Mammary epithelial cell (primary cell): ENCODE measurements at regions of chr2 and their contacts with region 1.

Region 1: GRCh38 chr2:241096979-241097378 is 5.1 kb downstream of the MTERF4 start:
- DNase-seq: no peak
- H3K4me3 ChIP-seq: no peak overlapping the region
- H3K27ac ChIP-seq: no peak overlapping the region
- H3K4me1 ChIP-seq: peaks cover 5% of the 10 kb centered on the region
- H3K27me3 ChIP-seq: no peaks in the 10 kb centered on the region
- CTCF ChIP-seq: no peak

Region 2: DNA sequence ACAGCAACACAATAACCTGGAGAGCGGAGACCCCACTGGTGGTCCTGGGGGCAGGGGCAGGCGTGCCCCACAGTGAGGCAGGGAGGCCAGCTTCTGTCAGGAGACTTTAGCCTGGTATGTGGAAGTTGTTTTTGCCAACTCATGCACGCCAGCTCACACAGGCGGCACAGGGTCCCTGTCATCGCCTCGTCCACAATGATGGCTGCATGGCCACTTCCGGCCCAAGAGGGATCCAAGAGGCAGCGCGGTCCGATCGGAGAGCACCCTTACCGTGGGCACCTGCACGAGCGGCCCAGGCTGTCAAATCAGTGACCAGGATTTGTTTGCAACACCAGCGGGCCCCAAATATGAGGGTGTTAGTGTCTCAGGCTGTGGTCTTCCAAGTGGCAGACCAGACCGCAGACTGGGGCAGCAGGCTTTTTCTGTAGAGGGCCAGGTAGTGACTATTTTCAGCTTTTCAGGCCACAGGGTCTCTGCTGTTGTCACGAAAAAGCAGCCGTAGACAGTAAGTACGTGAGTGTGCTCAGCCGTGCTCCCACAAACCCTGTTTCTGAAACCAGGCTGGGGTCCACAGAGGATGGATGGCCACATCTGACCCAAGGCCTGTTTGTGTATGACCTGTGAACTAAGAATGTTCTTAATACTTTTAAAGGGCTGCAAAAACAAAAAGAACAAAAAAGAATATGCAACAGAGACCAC is 77.4 kb before region 1 on chr2:
- CTCF ChIA-PET with region 1: no interaction called
- dilution Hi-C with region 1: loop called (anchors 5 kb)
- in situ Hi-C with region 1: no loop called
- intact Hi-C with region 1: no loop called
- DNase-seq: no peak
- H3K4me3 ChIP-seq: no peak overlapping the region
- H3K27ac ChIP-seq: no peak overlapping the region
- H3K4me1 ChIP-seq: peaks cover 8% of the 10 kb centered on the region
- H3K27me3 ChIP-seq: peaks cover 2% of the 10 kb centered on the region
- CTCF ChIP-seq: no peak

Region 3: DNA sequence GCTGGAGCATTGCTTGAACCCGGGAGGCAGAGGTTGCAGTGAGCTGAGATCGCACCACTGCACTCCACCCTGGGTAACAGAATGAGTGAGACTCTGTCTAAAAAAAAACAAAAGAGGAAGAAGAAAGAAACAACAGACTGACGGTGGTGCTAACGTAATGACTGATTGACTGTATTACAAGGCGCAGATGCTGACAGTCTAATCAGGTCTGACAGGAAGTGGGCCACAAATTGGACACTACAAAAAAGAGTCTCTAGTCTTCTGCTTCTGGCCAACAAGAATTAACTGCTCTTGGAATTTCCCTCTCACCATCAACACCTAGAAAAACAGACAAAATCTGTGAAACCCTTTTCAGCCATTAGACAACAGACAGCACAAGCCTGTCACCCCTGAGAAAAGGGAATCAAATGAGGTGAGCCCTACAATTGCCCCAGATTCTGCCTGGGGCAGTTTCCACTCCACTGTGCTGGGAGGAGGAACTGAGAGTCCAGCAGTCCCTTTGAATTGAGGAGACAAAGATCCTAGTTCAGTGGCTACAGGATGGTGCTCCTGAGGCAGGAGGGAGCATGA is 55.3 kb before region 1 on chr2:
- CTCF ChIA-PET with region 1: no interaction called
- dilution Hi-C with region 1: no loop called
- in situ Hi-C with region 1: no loop called
- intact Hi-C with region 1: no loop called
- DNase-seq: no peak
- H3K4me3 ChIP-seq: no peak overlapping the region
- H3K27ac ChIP-seq: no peak overlapping the region
- H3K4me1 ChIP-seq: peaks cover 2% of the 10 kb centered on the region
- H3K27me3 ChIP-seq: peaks cover 7% of the 10 kb centered on the region
- CTCF ChIP-seq: no peak